ENCODE measurements at regions of chr3 and their contacts with region 1.

Region 1: GRCh38 chr3:136752422-136753325 is 496 bp upstream of the STAG1 start:
- DNase-seq: peak; percentile 98 to 99 (median 99)
- H3K4me3 ChIP-seq: peak overlapping the region; percentile 81 to 97 (median 92)
- H3K4me3 Mint-ChIP-seq: peak overlapping the region; percentile 87 to 95
- H3K27ac ChIP-seq: peak overlapping the region; percentile 97 to 98
- H3K27ac Mint-ChIP-seq: peak overlapping the region; percentile 92 to 99 (median 98)
- H3K4me1 ChIP-seq: peaks cover 31 to 42% of the 10 kb centered on the region in 2 donors
- H3K4me1 Mint-ChIP-seq: peaks cover 40% of the 10 kb centered on the region
- H3K27me3 ChIP-seq: no peaks in the 10 kb centered on the region
- H3K27me3 Mint-ChIP-seq: no peaks in the 10 kb centered on the region
- CTCF ChIP-seq: peak; percentile 11

Region 2: DNA sequence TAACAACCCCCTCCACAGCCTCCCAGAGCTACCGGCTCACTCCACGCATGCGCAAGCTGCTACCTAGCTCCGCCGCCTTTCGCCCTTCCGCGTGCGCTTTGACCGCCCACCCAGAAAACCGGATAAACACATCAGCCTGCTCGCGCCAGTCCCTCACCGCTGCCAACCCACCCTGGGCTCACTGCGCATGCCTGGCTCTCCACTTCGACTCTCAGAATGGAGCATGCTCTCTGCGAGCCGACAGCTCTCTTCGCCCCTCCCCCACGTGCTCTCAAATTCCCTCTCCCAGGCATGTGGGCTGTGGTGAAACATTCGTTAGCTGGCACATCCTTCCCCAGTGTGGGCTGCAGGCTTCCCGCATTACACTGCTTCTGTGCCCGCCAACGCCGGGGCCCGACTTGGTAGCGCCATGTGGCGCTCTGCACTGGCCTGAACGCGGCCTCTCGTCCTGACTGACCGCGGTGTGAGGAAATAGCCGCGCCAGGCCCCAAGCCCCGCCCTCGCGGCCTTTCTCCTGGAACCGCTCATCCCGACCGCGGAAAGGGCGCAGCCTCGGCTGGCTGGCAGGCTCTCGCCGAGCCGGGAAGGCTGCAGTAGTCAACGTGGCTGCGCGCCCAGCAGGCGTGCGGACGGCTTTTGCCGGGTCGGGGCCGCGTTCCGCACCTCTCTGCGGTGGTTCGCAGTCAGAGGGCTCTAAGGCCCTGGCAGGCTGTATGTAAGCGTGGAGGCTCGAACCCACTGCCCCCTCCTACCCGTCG is 556.1 kb before region 1 on chr3:
- intact Hi-C with region 1: loop called in 1 of 2 experiments (anchors 5 kb)
- DNase-seq: peak; percentile 97 to 98 (median 97)
- H3K4me3 ChIP-seq: peak overlapping the region; percentile 92 to 99 (median 94)
- H3K4me3 Mint-ChIP-seq: peak overlapping the region; percentile 94 to 98
- H3K27ac ChIP-seq: peak overlapping the region; percentile 91 to 94
- H3K27ac Mint-ChIP-seq: peak overlapping the region; percentile 94 to 98 (median 97)
- H3K4me1 ChIP-seq: peaks cover 29 to 43% of the 10 kb centered on the region in 2 donors
- H3K4me1 Mint-ChIP-seq: peaks cover 38% of the 10 kb centered on the region
- H3K27me3 ChIP-seq: no peaks in the 10 kb centered on the region
- H3K27me3 Mint-ChIP-seq: peaks cover 0 to 2% (median 2%) of the 10 kb centered on the region in 3 donors
- CTCF ChIP-seq: no peak

Region 3: GRCh38 chr3:136437043-136437442 is 315.6 kb before region 1 on chr3:
- intact Hi-C with region 1: no loop called
- DNase-seq: no peak
- H3K4me3 ChIP-seq: no peak overlapping the region
- H3K4me3 Mint-ChIP-seq: no peak overlapping the region
- H3K27ac ChIP-seq: no peak overlapping the region
- H3K27ac Mint-ChIP-seq: no peak overlapping the region
- H3K4me1 ChIP-seq: no peaks in the 10 kb centered on the region
- H3K4me1 Mint-ChIP-seq: no peaks in the 10 kb centered on the region
- H3K27me3 ChIP-seq: no peaks in the 10 kb centered on the region
- H3K27me3 Mint-ChIP-seq: peaks cover 0 to 2% (median 0%) of the 10 kb centered on the region in 3 donors
- CTCF ChIP-seq: no peak

Region 4: GRCh38 chr3:136543385-136543784 is 209.3 kb before region 1 on chr3:
- intact Hi-C with region 1: loop called in 1 of 2 experiments (anchors 5 kb)
- DNase-seq: peak; percentile 57 to 88 (median 71)
- H3K4me3 ChIP-seq: peak overlapping the region in 1 of 3 experiments; percentile 43
- H3K4me3 Mint-ChIP-seq: peak overlapping the region in 1 of 2 donors; percentile 72
- H3K27ac ChIP-seq: peak overlapping the region in 1 of 2 donors; percentile 73
- H3K27ac Mint-ChIP-seq: peak overlapping the region; percentile 60 to 89 (median 80)
- H3K4me1 ChIP-seq: peaks cover 25 to 42% of the 10 kb centered on the region in 2 donors
- H3K4me1 Mint-ChIP-seq: peaks cover 36% of the 10 kb centered on the region
- H3K27me3 ChIP-seq: no peaks in the 10 kb centered on the region
- H3K27me3 Mint-ChIP-seq: no peaks in the 10 kb centered on the region
- CTCF ChIP-seq: no peak

Region 5: GRCh38 chr3:136624894-136625815 is 127.5 kb before region 1 on chr3:
- intact Hi-C with region 1: loop called in 1 of 2 experiments (anchors 5 kb)
- DNase-seq: no peak
- H3K4me3 ChIP-seq: peak overlapping the region in 1 of 3 experiments; percentile 22
- H3K4me3 Mint-ChIP-seq: no peak overlapping the region
- H3K27ac ChIP-seq: peak overlapping the region in 1 of 2 donors; percentile 47
- H3K27ac Mint-ChIP-seq: peak overlapping the region; percentile 4 to 80 (median 55)
- H3K4me1 ChIP-seq: peaks cover 38 to 49% of the 10 kb centered on the region in 2 donors
- H3K4me1 Mint-ChIP-seq: peaks cover 38% of the 10 kb centered on the region
- H3K27me3 ChIP-seq: no peaks in the 10 kb centered on the region
- H3K27me3 Mint-ChIP-seq: no peaks in the 10 kb centered on the region
- CTCF ChIP-seq: no peak

Region 6: DNA sequence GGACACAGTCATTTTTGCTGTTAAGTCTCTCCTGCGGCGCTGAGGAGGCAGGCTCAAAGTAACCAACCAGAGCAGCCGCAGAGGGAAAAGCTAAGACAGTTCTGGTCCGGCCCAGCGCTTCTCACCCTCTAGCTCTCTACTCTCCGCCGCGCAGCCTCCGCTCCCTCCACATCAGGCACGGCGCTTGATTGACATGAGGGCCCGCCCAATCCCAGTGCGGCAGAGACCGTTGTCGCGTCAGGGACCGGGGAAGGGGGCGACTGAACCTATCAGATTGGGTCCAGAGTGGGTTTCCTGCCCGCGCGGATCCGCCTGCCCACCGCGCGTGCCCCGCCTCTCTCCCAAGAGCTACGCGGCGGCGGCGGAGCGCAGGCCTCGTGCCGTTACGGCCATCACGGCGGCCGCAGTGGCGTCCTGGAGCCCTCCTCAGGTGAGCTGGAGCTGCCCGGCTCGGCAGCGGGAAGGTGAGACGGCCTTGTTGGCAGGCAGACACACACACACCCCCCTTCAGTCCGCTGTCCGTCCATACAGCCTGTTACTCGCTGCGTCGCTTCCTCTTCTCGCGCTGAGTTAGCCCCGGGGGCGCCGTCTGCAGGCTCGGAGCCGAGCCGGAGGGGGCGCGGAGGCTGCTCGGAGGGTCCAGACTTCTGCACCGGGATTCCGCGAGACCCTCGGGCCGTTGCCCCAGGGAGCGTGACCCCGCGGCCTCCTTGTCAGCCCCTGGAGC is 109.4 kb after region 1 on chr3 and contains the start of gene NCK1:
- intact Hi-C with region 1: loop called in 1 of 2 experiments (anchors 10 kb)
- DNase-seq: peak; percentile 92 to 94 (median 93)
- H3K4me3 ChIP-seq: peak within 1 kb of the TSS; percentile 78 to 97 (median 88)
- H3K4me3 Mint-ChIP-seq: peak within 1 kb of the TSS; percentile 89 to 96
- H3K27ac ChIP-seq: peak within 1 kb of the TSS; percentile 87 to 96
- H3K27ac Mint-ChIP-seq: peak within 1 kb of the TSS; percentile 93 to 97 (median 95)
- H3K4me1 ChIP-seq: peaks cover 38 to 56% of the 10 kb centered on the region in 2 donors
- H3K4me1 Mint-ChIP-seq: peaks cover 63% of the 10 kb centered on the region
- H3K27me3 ChIP-seq: no peaks in the 10 kb centered on the region
- H3K27me3 Mint-ChIP-seq: peaks cover 0 to 2% (median 0%) of the 10 kb centered on the region in 3 donors
- CTCF ChIP-seq: no peak
- polyA plus RNA-seq, gene NCK1: 20.4 to 28.8 (median 22.8) TPM

Region 7: GRCh38 chr3:137013955-137014688 is 261.4 kb after region 1 on chr3:
- intact Hi-C with region 1: loop called (anchors 5 to 10 kb)
- DNase-seq: peak; percentile 74 to 80 (median 78)
- H3K4me3 ChIP-seq: peak overlapping the region; percentile 42 to 73 (median 72)
- H3K4me3 Mint-ChIP-seq: peak overlapping the region; percentile 81 to 96
- H3K27ac ChIP-seq: no peak overlapping the region
- H3K27ac Mint-ChIP-seq: peak overlapping the region in 4 of 7 donors; percentile 0 to 76 (median 63)
- H3K4me1 ChIP-seq: peaks cover 0 to 11% of the 10 kb centered on the region in 2 donors
- H3K4me1 Mint-ChIP-seq: peaks cover 12% of the 10 kb centered on the region
- H3K27me3 ChIP-seq: no peaks in the 10 kb centered on the region
- H3K27me3 Mint-ChIP-seq: no peaks in the 10 kb centered on the region
- CTCF ChIP-seq: peak; percentile 91

Measured in CD14-positive monocyte (primary cell).